ENCODE measurements at regions of chr1 and their contacts with region 1.

Region 1: DNA sequence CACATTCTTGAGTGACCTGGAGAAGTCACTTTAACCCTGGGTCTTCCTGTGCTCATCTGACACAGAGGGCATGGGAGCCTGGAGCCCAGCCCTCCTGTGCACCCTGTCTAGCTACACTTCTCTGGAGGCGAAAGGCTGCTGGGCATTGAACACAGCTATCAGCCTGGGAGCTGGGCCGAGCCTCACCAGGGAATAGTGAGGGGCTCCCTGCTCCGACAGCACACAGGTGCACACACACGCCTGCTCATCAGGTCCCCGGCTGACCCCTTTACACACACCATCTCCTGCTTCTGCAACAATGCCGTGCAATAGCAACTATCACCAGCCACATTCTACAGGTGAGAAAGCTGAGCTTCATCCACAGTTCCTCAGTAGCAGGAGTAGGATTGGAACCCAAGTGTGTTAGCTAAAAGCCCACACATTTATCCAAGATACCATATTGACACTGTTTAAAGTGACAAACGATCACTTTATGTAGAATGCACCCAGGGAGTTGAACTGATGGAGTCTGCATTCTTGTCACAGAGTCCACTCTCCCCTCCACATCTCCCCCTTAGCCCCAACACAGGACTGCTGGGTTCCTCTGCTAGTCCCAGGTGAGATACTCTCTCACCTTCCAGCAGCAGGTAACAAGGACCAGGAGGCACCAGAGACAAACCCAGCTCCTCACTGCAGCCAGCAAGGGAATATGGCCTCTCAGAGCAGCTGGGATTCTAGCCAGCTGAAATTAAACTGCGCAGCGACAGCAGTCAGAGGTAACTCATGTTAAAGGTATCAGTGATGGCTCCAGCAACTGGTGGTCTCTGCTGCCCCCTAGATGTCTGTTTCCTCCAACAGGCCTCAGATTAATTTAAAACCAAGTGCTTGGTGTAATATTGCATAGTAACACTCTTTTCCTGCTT is 18.3 kb upstream of the CAPN8 start:
- DNase-seq: peak; percentile 53 to 76 (median 73)
- H3K4me3 ChIP-seq: no peak overlapping the region
- H3K27ac ChIP-seq: no peak overlapping the region
- H3K4me1 ChIP-seq: no peaks in the 10 kb centered on the region
- H3K27me3 ChIP-seq: no peaks in the 10 kb centered on the region
- CTCF ChIP-seq: peak; percentile 52 to 76 (median 66)
- EP300 ChIP-seq: no peak
- POLR2A ChIP-seq: no peak

Region 2: GRCh38 chr1:222792744-222793143 is 891.1 kb before region 1 on chr1:
- intact Hi-C with region 1: loop called in 1 of 4 experiments (anchors 10 kb)
- DNase-seq: no peak
- H3K4me3 ChIP-seq: no peak overlapping the region
- H3K27ac ChIP-seq: no peak overlapping the region
- H3K4me1 ChIP-seq: no peaks in the 10 kb centered on the region
- H3K27me3 ChIP-seq: no peaks in the 10 kb centered on the region
- CTCF ChIP-seq: peak in 2 of 3 donors; percentile 52 to 76
- EP300 ChIP-seq: no peak
- POLR2A ChIP-seq: no peak

Region 3: GRCh38 chr1:223133824-223134435 is 549.9 kb before region 1 on chr1:
- intact Hi-C with region 1: loop called in 3 of 4 experiments (anchors 5 to 10 kb)
- DNase-seq: peak; percentile 83 to 89 (median 88)
- H3K4me3 ChIP-seq: peak overlapping the region; percentile 41
- H3K27ac ChIP-seq: peak overlapping the region in 1 of 2 donors; percentile 58
- H3K4me1 ChIP-seq: peaks cover 11% of the 10 kb centered on the region
- H3K27me3 ChIP-seq: no peaks in the 10 kb centered on the region
- CTCF ChIP-seq: peak in 2 of 3 donors; percentile 79 to 87
- EP300 ChIP-seq: no peak
- POLR2A ChIP-seq: no peak

Region 4: DNA sequence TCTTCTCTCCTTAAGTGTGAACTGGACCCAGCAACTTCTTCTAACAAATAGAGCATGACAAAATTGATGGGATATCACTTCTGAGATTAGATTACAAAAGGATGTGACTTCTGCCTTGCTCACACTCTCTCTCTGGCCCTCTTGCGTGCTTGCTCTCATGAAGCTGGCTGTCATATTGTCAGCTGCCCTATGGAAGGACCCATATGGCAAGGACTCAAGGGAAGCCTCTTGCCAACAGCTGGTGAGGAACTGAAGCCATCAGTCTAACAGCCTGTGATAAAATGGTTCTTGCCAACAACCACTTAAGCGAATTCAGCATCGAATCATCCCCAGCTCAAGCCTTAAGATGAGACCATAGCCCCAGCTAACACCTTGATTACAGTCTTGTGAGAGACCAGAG is 536.0 kb before region 1 on chr1:
- intact Hi-C with region 1: no loop called
- DNase-seq: no peak
- H3K4me3 ChIP-seq: no peak overlapping the region
- H3K27ac ChIP-seq: no peak overlapping the region
- H3K4me1 ChIP-seq: peaks cover 6% of the 10 kb centered on the region
- H3K27me3 ChIP-seq: no peaks in the 10 kb centered on the region
- CTCF ChIP-seq: no peak
- EP300 ChIP-seq: no peak
- POLR2A ChIP-seq: no peak

Region 5: DNA sequence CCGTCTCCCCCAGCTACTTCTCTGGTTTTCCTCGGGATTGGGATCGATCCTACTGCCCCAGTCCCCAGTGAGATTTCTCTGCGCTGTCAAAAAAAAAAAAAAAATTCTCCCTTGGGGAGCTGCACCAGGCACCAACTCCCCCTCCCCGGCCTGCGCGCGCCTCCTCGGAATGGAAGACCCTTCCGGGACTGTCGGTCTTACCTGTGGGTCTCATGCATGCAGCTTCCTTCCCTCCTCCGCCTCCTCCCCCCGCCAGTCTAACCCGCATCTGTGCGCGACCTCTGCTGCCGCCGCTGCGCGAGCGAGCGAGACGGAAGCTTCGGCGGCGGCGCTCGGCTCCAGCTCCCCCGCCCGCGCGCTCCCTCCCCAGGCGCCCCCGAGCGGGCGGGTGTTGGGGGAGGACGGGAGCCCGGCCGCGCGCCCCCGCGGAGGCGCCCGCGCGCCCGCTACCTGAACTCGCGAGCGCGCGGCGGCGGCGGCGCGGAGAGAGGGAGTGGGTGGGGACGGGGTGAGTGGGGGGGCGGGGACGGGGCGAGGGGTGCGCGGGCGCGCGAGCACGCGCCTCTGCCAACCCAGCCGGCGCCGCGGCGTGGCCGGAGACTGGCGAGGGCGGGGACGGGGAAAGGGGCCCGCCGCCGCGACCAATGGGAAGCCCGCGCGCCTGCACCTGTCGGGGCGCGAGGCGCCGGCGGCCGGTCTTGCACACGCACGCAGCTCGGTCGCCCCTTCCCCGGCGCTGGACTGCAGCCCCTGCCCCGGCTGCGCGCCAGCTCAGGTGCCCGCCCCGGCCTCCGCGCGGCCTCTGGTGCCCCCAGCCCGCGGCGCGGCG is 319.8 kb before region 1 on chr1 and contains the start of gene SUSD4:
- intact Hi-C with region 1: loop called in 1 of 4 experiments (anchors 10 kb)
- DNase-seq: peak; percentile 67 to 81 (median 73)
- H3K4me3 ChIP-seq: peak within 1 kb of the TSS; percentile 42
- H3K27ac ChIP-seq: peak within 1 kb of the TSS in 1 of 2 donors; percentile 48
- H3K4me1 ChIP-seq: no peaks in the 10 kb centered on the region
- H3K27me3 ChIP-seq: no peaks in the 10 kb centered on the region
- CTCF ChIP-seq: no peak
- EP300 ChIP-seq: no peak
- POLR2A ChIP-seq: no peak
- total RNA-seq, gene SUSD4: 30.6 to 80.5 (median 36.6) TPM

Region 6: DNA sequence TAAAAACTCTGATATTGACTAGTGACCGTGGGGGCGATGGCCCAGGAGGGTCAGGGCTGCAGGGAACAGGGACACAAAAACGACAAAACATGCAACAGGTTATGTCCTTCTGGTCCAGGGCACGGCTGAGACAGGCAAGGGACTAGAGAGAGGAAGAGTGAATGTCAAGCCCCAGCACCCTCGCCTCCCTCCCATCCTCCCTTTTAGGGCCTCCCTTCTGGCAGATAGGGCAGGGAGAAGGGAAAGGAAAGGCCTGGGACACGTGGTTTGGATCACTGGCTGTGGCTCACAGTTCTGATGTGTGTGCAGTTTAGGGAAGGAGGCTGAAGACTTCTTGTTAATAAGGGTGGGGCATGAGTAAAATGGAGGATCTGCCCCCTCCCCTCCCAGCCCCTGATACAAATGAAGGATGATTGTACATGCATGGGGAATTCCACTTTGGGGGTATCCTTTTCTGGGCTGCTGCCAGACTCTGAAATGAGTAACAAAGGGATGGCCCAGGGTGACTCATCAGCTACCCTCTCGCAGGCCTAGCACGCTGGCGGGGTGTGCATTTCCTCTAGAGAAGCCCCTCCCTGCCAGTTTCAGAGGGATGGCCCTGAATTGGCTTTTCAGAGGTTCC is 42.7 kb after region 1 on chr1:
- intact Hi-C with region 1: no loop called
- DNase-seq: peak; percentile 77 to 86 (median 83)
- H3K4me3 ChIP-seq: no peak overlapping the region
- H3K27ac ChIP-seq: peak overlapping the region; percentile 70 to 71
- H3K4me1 ChIP-seq: peaks cover 27% of the 10 kb centered on the region
- H3K27me3 ChIP-seq: no peaks in the 10 kb centered on the region
- CTCF ChIP-seq: no peak
- EP300 ChIP-seq: no peak
- POLR2A ChIP-seq: no peak

Measured in ovary (tissue), 10 donors.